BJ (cell line): ENCODE measurements at regions of chrX and their contacts with region 1.

Region 1: GRCh38 chrX:120250522-120251271 is at the start of gene ZBTB33:
- DNase-seq: peak; percentile 70
- H3K4me3 ChIP-seq: peak within 1 kb of the TSS; percentile 68
- H3K27me3 ChIP-seq: 0 out of 2 replicates have a peak, but pooled peaks cover 3% of the 10 kb centered on the region
- CTCF ChIP-seq: peak; percentile 67
- polyA plus RNA-seq, gene ZBTB33: 2.2 and 4.6 TPM in 2 replicates

Region 2: GRCh38 chrX:120224388-120224787 is 26.3 kb before region 1 on chrX:
- CTCF ChIA-PET with region 1: no interaction called
- POLR2A ChIA-PET with region 1: no interaction called
- DNase-seq: no peak
- H3K4me3 ChIP-seq: no peak overlapping the region
- H3K27me3 ChIP-seq: no peaks in the 10 kb centered on the region
- CTCF ChIP-seq: no peak

Region 3: GRCh38 chrX:120499301-120500072 is 248.8 kb after region 1 on chrX:
- CTCF ChIA-PET with region 1: no interaction called
- POLR2A ChIA-PET with region 1: interaction called, 11 read pairs
- DNase-seq: no peak
- H3K4me3 ChIP-seq: no peak overlapping the region
- H3K27me3 ChIP-seq: no peaks in the 10 kb centered on the region
- CTCF ChIP-seq: no peak